MCF 10A (cell line): ENCODE measurements at regions of chr2 and their contacts with region 1.

Region 1: GRCh38 chr2:157336137-157337010 is 10.8 kb upstream of the ERMN start:
- DNase-seq: peak; percentile 65
- H3K4me3 Mint-ChIP-seq: no peak overlapping the region
- H3K27ac Mint-ChIP-seq: no peak overlapping the region
- H3K4me1 Mint-ChIP-seq: no peaks in the 10 kb centered on the region
- H3K27me3 Mint-ChIP-seq: no peaks in the 10 kb centered on the region
- CTCF ChIP-seq: peak; percentile 68

Region 2: DNA sequence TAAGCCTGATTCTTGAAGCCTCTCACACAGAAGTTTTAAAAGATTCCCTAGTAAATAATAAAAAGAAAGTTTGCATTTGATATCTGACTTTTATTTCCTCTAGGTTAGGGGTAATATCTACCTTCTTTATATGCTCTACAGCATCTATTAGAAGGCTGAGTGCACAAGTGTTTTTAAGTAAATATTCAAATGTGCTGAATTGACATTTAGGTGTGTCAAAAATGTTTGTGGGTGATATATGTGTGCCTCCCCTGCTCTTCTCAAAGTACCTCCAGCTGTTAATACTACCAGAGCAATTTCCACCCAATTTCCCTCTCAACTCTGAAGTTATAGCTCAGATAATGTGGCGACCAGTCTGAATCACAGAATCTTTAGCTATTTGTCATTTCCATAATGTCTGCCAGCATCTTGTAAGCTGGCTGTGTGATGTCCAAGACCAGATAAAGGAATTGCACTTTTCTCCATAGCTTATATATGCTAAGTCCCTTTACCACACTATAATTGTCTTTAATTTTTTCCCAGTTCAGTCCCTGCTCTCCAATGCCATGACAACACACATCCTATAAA is 13.7 kb after region 1 on chr2:
- CTCF ChIA-PET with region 1: interaction called, 62 read pairs
- POLR2A ChIA-PET with region 1: no interaction called
- intact Hi-C with region 1: no loop called
- DNase-seq: no peak
- H3K4me3 Mint-ChIP-seq: no peak overlapping the region
- H3K27ac Mint-ChIP-seq: no peak overlapping the region
- H3K4me1 Mint-ChIP-seq: no peaks in the 10 kb centered on the region
- H3K27me3 Mint-ChIP-seq: no peaks in the 10 kb centered on the region
- CTCF ChIP-seq: no peak

Region 3: DNA sequence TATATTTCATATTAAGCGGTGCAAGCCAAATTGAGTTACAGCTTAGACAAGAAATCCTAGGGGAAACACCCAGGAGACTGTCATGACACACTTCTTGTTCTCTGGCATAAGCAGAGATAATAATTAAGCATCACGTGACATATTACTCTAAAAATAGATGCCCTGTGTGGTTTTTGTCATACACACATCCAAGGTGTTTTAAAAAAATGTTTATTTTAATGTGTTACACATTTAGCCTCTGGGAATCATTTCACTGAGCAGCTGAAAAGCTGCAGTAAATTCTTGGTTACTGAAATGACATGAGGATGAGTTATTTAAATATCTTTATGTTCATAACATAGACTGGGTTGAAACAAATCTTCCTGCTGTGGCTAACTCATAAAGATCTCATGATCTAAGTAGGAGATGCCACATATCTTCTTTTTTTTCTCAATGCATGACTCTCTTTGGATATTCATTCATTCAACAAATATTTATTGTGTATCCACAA is 27.3 kb after region 1 on chr2:
- CTCF ChIA-PET with region 1: interaction called, 14 read pairs
- POLR2A ChIA-PET with region 1: no interaction called
- intact Hi-C with region 1: no loop called
- DNase-seq: peak; percentile 4
- H3K4me3 Mint-ChIP-seq: no peak overlapping the region
- H3K27ac Mint-ChIP-seq: no peak overlapping the region
- H3K4me1 Mint-ChIP-seq: peaks cover 12% of the 10 kb centered on the region
- H3K27me3 Mint-ChIP-seq: no peaks in the 10 kb centered on the region
- CTCF ChIP-seq: no peak

Region 4: DNA sequence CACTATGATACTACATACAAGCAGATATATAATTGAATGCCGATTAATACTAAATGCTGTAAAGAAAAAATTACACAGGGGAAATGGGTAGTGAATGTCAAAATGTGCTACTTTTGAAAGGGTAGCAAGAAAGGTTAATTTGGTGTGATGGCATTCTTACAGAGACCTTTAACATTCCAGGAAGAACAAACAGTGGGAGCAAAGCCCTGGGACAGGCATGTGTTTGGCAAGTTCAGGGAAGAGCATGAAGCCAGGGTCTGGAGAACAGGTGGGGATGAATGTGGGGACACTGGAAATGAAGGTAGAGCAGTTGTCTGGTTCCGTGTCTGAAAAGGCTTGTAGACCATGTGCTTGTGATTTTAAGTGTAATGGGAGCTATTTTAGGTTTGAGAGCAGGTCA is 189.7 kb after region 1 on chr2:
- CTCF ChIA-PET with region 1: no interaction called
- POLR2A ChIA-PET with region 1: no interaction called
- intact Hi-C with region 1: no loop called
- DNase-seq: no peak
- H3K4me3 Mint-ChIP-seq: no peak overlapping the region
- H3K27ac Mint-ChIP-seq: no peak overlapping the region
- H3K4me1 Mint-ChIP-seq: no peaks in the 10 kb centered on the region
- H3K27me3 Mint-ChIP-seq: peaks cover 58% of the 10 kb centered on the region
- CTCF ChIP-seq: no peak

Region 5: DNA sequence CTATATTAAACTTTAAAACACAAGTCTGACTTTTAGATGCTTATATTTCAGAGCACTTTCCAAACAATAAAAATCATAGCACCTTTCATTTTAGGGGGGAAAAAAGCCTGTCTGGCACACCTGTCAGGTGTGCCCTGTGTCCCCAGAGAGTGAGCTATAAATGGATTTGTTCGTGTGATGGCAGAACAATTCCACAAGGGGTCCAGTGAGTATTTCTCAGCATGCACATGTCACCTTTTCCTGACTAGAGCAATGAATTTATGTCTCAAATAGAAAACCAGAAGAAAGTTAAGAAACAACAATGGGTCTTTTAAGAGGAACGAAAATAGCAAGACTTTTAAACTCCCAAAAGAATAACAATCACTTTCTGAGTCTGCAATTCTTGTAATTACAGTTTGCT is 236.4 kb after region 1 on chr2:
- CTCF ChIA-PET with region 1: no interaction called
- POLR2A ChIA-PET with region 1: no interaction called
- intact Hi-C with region 1: no loop called
- DNase-seq: peak; percentile 29
- H3K4me3 Mint-ChIP-seq: no peak overlapping the region
- H3K27ac Mint-ChIP-seq: no peak overlapping the region
- H3K4me1 Mint-ChIP-seq: no peaks in the 10 kb centered on the region
- H3K27me3 Mint-ChIP-seq: no peaks in the 10 kb centered on the region
- CTCF ChIP-seq: peak; percentile 43